CD8-positive, alpha-beta T cell (primary cell): ENCODE measurements at regions of chr6 and their contacts with region 1.

Region 1: GRCh38 chr6:42104095-42104806 is 38.2 kb downstream of the C6orf132 start:
- DNase-seq: peak; percentile 38 to 86 (median 72)
- ATAC-seq: peak; percentile 89
- H3K4me3 ChIP-seq: peak overlapping the region; percentile 45 to 69
- H3K4me3 Mint-ChIP-seq: peak overlapping the region; percentile 72
- H3K27ac ChIP-seq: peak overlapping the region; percentile 11 to 38
- H3K27ac Mint-ChIP-seq: peak overlapping the region; percentile 62
- H3K4me1 ChIP-seq: peaks cover 8% of the 10 kb centered on the region
- H3K4me1 Mint-ChIP-seq: peaks cover 7% of the 10 kb centered on the region
- H3K27me3 ChIP-seq: no peaks in the 10 kb centered on the region
- H3K27me3 Mint-ChIP-seq: no peaks in the 10 kb centered on the region
- CTCF ChIP-seq: peak; percentile 98

Region 2: GRCh38 chr6:41779793-41780545 is 324.3 kb before region 1 on chr6 and contains the start of gene FRS3:
- CTCF ChIA-PET with region 1: interaction called, 10 read pairs
- POLR2A ChIA-PET with region 1: no interaction called
- intact Hi-C with region 1: loop called in 1 of 2 experiments (anchors 1 kb)
- DNase-seq: peak; percentile 96 to 100 (median 99)
- ATAC-seq: peak; percentile 97
- H3K4me3 ChIP-seq: peak within 1 kb of the TSS; percentile 73 to 93
- H3K4me3 Mint-ChIP-seq: peak within 1 kb of the TSS; percentile 93
- H3K27ac ChIP-seq: peak within 1 kb of the TSS in 1 of 2 experiments; percentile 23
- H3K27ac Mint-ChIP-seq: no peak within 1 kb of the TSS
- H3K4me1 ChIP-seq: peaks cover 18% of the 10 kb centered on the region
- H3K4me1 Mint-ChIP-seq: peaks cover 21% of the 10 kb centered on the region
- H3K27me3 ChIP-seq: no peaks in the 10 kb centered on the region
- H3K27me3 Mint-ChIP-seq: peaks cover 4% of the 10 kb centered on the region
- CTCF ChIP-seq: peak; percentile 74
- total RNA-seq, gene FRS3: 3.7 to 6.2 TPM

Region 3: GRCh38 chr6:41895300-41896233 is 208.7 kb before region 1 on chr6 and contains the start of gene USP49:
- CTCF ChIA-PET with region 1: interaction called, 4 read pairs
- POLR2A ChIA-PET with region 1: no interaction called
- intact Hi-C with region 1: loop called in 1 of 2 experiments (anchors 2 kb)
- DNase-seq: peak; percentile 80 to 94 (median 91)
- ATAC-seq: peak; percentile 95
- H3K4me3 ChIP-seq: peak within 1 kb of the TSS; percentile 78 to 90
- H3K4me3 Mint-ChIP-seq: no peak within 1 kb of the TSS
- H3K27ac ChIP-seq: peak within 1 kb of the TSS; percentile 55 to 77
- H3K27ac Mint-ChIP-seq: peak within 1 kb of the TSS; percentile 89
- H3K4me1 ChIP-seq: peaks cover 24% of the 10 kb centered on the region
- H3K4me1 Mint-ChIP-seq: peaks cover 10% of the 10 kb centered on the region
- H3K27me3 ChIP-seq: no peaks in the 10 kb centered on the region
- H3K27me3 Mint-ChIP-seq: no peaks in the 10 kb centered on the region
- CTCF ChIP-seq: no peak
- total RNA-seq, gene USP49: 1.6 to 1.8 TPM

Region 4: DNA sequence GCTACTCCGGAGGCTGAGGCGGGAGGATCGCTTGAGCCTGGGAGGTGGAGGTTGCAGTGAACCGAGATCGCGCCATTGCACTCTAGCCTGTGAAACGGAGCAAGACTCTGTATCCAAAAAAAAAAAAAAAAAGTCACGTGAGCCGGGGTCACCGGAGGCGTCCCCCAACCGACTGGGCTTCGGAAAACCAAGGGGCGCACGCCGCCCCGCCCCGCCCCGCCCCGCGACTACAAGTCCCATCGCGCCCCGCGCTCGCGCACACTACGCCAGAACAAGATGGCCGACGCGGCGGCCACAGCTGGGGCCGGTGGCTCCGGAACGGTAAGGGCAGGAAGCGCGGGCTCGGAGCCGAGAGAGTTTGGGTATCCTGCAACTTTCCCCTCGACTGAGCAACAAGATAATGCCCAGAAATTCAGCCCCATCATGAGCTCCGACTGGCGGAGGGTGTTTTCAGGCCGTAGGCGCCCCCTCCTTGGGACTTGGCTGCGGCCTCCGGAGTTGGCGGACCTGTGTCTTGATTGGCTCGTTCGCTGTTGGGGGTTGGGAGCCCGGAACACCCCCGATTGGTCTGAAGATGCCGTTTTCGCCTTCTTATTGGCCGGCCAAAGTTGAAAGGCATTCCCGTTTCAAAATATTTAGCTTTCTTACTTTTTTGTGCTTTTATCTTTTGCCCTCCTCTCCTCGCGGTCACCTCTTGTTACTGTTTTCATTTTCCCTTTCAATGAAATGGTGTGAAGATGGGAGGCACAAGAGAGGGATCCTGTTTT is 53.8 kb before region 1 on chr6 and contains the start of gene TAF8:
- CTCF ChIA-PET with region 1: interaction called, 20 read pairs
- POLR2A ChIA-PET with region 1: interaction called, 12 read pairs
- intact Hi-C with region 1: loop called in 1 of 2 experiments (anchors 1 kb)
- DNase-seq: peak; percentile 72 to 94 (median 89)
- ATAC-seq: peak; percentile 57
- H3K4me3 ChIP-seq: peak within 1 kb of the TSS; percentile 98 to 99
- H3K4me3 Mint-ChIP-seq: peak within 1 kb of the TSS; percentile 95
- H3K27ac ChIP-seq: peak within 1 kb of the TSS; percentile 80 to 89
- H3K27ac Mint-ChIP-seq: peak within 1 kb of the TSS; percentile 97
- H3K4me1 ChIP-seq: peaks cover 39% of the 10 kb centered on the region
- H3K4me1 Mint-ChIP-seq: peaks cover 66% of the 10 kb centered on the region
- H3K27me3 ChIP-seq: no peaks in the 10 kb centered on the region
- H3K27me3 Mint-ChIP-seq: no peaks in the 10 kb centered on the region
- CTCF ChIP-seq: no peak
- total RNA-seq, gene TAF8: 24.6 to 33.3 TPM

Region 5: GRCh38 chr6:42088101-42088591 is 16.1 kb before region 1 on chr6:
- CTCF ChIA-PET with region 1: interaction called, 24 read pairs
- POLR2A ChIA-PET with region 1: no interaction called
- intact Hi-C with region 1: no loop called
- DNase-seq: no peak
- ATAC-seq: no peak
- H3K4me3 ChIP-seq: no peak overlapping the region
- H3K4me3 Mint-ChIP-seq: no peak overlapping the region
- H3K27ac ChIP-seq: no peak overlapping the region
- H3K27ac Mint-ChIP-seq: no peak overlapping the region
- H3K4me1 ChIP-seq: no peaks in the 10 kb centered on the region
- H3K4me1 Mint-ChIP-seq: no peaks in the 10 kb centered on the region
- H3K27me3 ChIP-seq: no peaks in the 10 kb centered on the region
- H3K27me3 Mint-ChIP-seq: no peaks in the 10 kb centered on the region
- CTCF ChIP-seq: no peak